Right cardiac atrium (tissue), 5 donors: ENCODE measurements at regions of chr3 and their contacts with region 1.

Region 1: GRCh38 chr3:176872771-176873209 is 324.5 kb downstream of the TBL1XR1 start:
- DNase-seq: peak in 2 of 3 donors; percentile 20 to 65
- ATAC-seq: peak; percentile 61 to 76
- H3K4me3 ChIP-seq: no peak overlapping the region
- H3K27ac ChIP-seq: no peak overlapping the region
- H3K4me1 ChIP-seq: peaks cover 3% of the 10 kb centered on the region
- H3K27me3 ChIP-seq: no peaks in the 10 kb centered on the region

Region 2: DNA sequence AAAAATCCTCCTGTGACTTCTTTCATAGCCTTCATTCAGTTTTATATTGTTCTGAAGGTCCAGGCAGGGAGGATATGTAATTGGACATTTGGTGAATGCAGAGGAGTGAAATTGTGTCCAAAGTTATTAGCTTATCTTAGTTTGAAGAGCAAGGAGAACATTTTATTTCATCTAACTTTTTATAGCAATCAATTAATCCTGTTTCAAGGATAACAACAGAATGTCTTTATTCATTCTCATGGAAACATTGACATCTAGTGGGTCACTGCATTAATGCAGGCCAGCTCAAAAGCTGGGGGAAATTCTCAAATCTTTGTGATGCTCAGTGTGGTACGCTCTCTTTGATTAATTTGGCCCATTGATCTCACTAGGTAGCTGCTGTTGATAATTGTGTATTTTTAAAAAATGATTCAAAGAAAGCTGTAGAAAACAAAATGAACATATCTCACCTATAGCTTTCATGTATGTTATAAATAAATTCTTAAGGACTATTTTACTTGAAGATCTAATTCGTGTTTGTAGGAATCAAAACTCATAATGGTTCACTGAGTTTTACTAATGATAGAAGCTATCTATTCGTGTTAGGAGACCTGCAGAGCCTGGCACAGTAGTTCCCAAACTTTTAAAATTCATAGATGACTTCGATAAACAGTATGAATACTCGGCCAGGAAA is 1512.6 kb after region 1 on chr3:
- intact Hi-C with region 1: loop called in 1 of 4 experiments (anchors 5 kb)
- DNase-seq: peak in 1 of 3 donors; percentile 33
- ATAC-seq: peak; percentile 61 to 73
- H3K4me3 ChIP-seq: no peak overlapping the region
- H3K27ac ChIP-seq: no peak overlapping the region
- H3K4me1 ChIP-seq: no peaks in the 10 kb centered on the region
- H3K27me3 ChIP-seq: no peaks in the 10 kb centered on the region